MCF 10A (cell line): ENCODE measurements at regions of chr10 and their contacts with region 1.

Region 1: GRCh38 chr10:132571650-132572535 is 34.3 kb downstream of the INPP5A start:
- DNase-seq: peak; percentile 95
- H3K4me3 Mint-ChIP-seq: peak overlapping the region; percentile 35
- H3K27ac Mint-ChIP-seq: no peak overlapping the region
- H3K4me1 Mint-ChIP-seq: peaks cover 6% of the 10 kb centered on the region
- H3K27me3 Mint-ChIP-seq: no peaks in the 10 kb centered on the region
- CTCF ChIP-seq: no peak

Region 2: DNA sequence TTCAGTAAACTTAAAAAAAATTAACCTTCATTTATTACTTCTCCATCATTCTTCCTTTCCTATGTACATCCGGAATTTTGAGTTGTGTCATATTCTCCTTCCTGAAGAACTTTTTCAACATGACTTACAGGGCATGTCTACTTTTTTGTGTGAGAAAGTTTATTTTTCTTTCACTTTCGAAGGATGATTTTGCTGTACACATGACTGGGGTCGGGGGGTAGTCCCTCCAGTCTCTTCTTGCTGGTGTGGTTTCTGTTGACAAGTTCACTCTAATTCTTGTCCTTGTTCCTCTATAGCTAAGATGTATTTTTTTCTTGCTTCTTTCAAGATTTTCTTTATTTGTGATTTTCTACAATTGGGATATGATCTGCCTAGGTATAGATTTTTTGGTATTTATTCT is 21.5 kb after region 1 on chr10:
- CTCF ChIA-PET with region 1: no interaction called
- POLR2A ChIA-PET with region 1: interaction called, 8 read pairs
- intact Hi-C with region 1: loop called (anchors 1 kb)
- DNase-seq: no peak
- H3K4me3 Mint-ChIP-seq: no peak overlapping the region
- H3K27ac Mint-ChIP-seq: no peak overlapping the region
- H3K4me1 Mint-ChIP-seq: peaks cover 28% of the 10 kb centered on the region
- H3K27me3 Mint-ChIP-seq: no peaks in the 10 kb centered on the region
- CTCF ChIP-seq: no peak

Region 3: GRCh38 chr10:132637477-132638129 is 65.7 kb after region 1 on chr10:
- CTCF ChIA-PET with region 1: no interaction called
- POLR2A ChIA-PET with region 1: no interaction called
- intact Hi-C with region 1: loop called (anchors 5 kb)
- DNase-seq: peak; percentile 63
- H3K4me3 Mint-ChIP-seq: no peak overlapping the region
- H3K27ac Mint-ChIP-seq: peak overlapping the region; percentile 36
- H3K4me1 Mint-ChIP-seq: peaks cover 24% of the 10 kb centered on the region
- H3K27me3 Mint-ChIP-seq: no peaks in the 10 kb centered on the region
- CTCF ChIP-seq: peak; percentile 75

Region 4: GRCh38 chr10:132918617-132919373 is 346.9 kb after region 1 on chr10:
- CTCF ChIA-PET with region 1: no interaction called
- POLR2A ChIA-PET with region 1: no interaction called
- intact Hi-C with region 1: no loop called
- DNase-seq: no peak
- H3K4me3 Mint-ChIP-seq: no peak overlapping the region
- H3K27ac Mint-ChIP-seq: no peak overlapping the region
- H3K4me1 Mint-ChIP-seq: no peaks in the 10 kb centered on the region
- H3K27me3 Mint-ChIP-seq: no peaks in the 10 kb centered on the region
- CTCF ChIP-seq: no peak